ENCODE measurements at regions of chr7 and their contacts with region 1.

Region 1: GRCh38 chr7:129751916-129752315 is 140.4 kb downstream of the NRF1 start:
- DNase-seq: no peak

Region 2: GRCh38 chr7:129816742-129817141 is 64.8 kb after region 1 on chr7:
- in situ Hi-C with region 1: loop called (anchors 10 kb)
- DNase-seq: no peak